Tibial artery (tissue), 4 donors: ENCODE measurements at regions of chrX and their contacts with region 1.

Region 1: GRCh38 chrX:106791495-106791894 is 11.0 kb upstream of the TBC1D8B start:
- DNase-seq: no peak
- H3K4me3 ChIP-seq: no peak overlapping the region
- H3K27ac ChIP-seq: no peak overlapping the region
- H3K4me1 ChIP-seq: no peaks in the 10 kb centered on the region
- H3K27me3 ChIP-seq: no peaks in the 10 kb centered on the region
- CTCF ChIP-seq: no peak

Region 2: DNA sequence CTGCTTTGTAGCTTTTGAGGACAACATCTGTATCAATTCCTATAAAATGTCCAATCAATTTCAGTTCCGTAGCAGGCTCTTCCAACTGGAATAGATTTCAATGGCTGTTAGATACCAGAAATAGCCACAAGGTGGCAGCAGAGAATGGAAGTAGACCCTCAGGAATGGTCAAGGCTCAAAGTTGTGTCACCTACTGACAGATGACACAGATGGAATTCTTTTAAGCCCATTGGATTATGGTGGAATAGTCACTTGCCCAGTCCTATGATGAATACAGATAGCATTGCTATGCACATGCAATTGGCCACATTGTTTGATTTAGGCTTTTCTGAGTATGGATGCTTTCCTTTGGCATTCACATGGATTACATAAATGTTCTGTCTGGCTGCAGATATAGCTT is 310.2 kb before region 1 on chrX:
- intact Hi-C with region 1: loop called (anchors 10 kb)
- DNase-seq: peak in 1 of 2 donors; percentile 20
- H3K4me3 ChIP-seq: no peak overlapping the region
- H3K27ac ChIP-seq: no peak overlapping the region
- H3K4me1 ChIP-seq: no peaks in the 10 kb centered on the region
- H3K27me3 ChIP-seq: no peaks in the 10 kb centered on the region
- CTCF ChIP-seq: peak; percentile 36 to 47